ENCODE measurements at regions of chr17 and their contacts with region 1.

Region 1: DNA sequence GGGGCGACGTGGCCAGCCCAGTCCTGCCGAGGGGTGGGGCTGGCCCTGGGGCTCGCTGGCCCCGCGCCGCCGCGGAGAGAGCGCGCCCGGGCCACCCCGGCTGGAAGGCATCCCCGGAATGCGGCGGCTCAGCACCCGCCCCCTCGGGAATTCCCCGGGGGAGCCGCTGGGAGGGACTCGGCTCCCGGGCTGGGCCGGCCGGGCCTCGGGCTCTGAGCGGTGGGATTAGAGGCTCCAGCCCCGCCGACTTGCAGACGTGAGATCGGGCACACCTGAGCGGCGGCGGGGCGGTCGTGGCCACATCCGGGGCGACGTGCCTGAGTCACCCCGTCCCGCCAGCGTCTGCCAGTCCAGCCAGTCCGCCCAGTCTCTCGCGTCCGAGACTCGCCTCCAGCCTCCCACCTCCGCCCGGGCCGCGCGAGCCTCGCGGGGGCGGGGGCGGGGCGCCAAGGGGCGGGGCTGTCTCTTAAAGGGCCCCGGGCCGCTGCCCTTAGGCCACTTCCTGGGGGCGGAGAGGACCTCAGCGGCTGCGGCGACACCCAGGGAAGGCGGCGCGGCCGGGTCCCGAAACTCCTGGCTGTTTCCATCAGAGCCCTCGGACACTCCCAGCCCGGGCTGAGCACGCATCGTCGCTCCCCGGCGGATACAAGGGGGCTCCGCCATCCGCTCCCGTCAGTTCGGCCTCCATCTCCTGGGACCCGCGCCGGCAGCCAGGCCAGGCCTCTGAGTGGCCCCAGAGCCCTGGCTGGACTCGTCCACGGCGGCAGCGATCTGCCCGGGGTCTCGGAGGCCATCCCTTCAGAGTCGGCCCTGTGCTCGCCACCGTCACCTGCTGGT is at the start of gene KCTD11:
- H3K4me3 ChIP-seq: peak within 1 kb of the TSS; percentile 70
- H3K27ac ChIP-seq: peak within 1 kb of the TSS; percentile 90
- H3K4me1 ChIP-seq: peaks cover 14% of the 10 kb centered on the region
- CTCF ChIP-seq: peak; percentile 85

Region 2: GRCh38 chr17:6969323-6969726 is 382.6 kb before region 1 on chr17:
- CTCF ChIA-PET with region 1: no interaction called
- POLR2A ChIA-PET with region 1: no interaction called
- H3K4me3 ChIP-seq: no peak overlapping the region
- H3K27ac ChIP-seq: no peak overlapping the region
- H3K4me1 ChIP-seq: no peaks in the 10 kb centered on the region
- CTCF ChIP-seq: no peak

Region 3: GRCh38 chr17:7323731-7324437 is 28.0 kb before region 1 on chr17:
- CTCF ChIA-PET with region 1: interaction called, 50 read pairs
- POLR2A ChIA-PET with region 1: interaction called, 25 read pairs
- H3K4me3 ChIP-seq: no peak overlapping the region
- H3K27ac ChIP-seq: no peak overlapping the region
- H3K4me1 ChIP-seq: peaks cover 6% of the 10 kb centered on the region
- CTCF ChIP-seq: peak; percentile 79

Region 4: DNA sequence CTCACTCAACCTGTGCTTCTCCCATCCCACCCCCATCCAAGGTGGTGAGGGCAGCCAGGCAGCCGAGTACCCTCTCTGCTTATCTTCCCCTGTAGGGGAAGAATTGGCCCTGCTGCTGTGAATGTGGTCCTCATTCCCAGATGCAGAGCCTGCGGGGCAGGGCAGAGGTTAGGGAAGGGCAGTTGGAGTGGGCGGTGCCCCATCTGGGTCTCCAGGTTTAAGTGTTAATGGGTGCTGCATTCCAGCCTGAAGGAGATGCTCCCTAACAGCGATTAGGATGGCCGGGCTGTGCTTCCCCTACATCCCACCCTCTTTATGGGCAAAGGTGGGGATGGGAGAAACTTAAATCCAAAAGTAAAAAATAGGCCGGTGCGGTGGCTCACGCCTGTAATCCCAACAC is 15.2 kb after region 1 on chr17:
- CTCF ChIA-PET with region 1: interaction called, 13 read pairs
- POLR2A ChIA-PET with region 1: interaction called, 4 read pairs
- H3K4me3 ChIP-seq: no peak overlapping the region
- H3K27ac ChIP-seq: no peak overlapping the region
- H3K4me1 ChIP-seq: no peaks in the 10 kb centered on the region
- CTCF ChIP-seq: no peak

Region 5: GRCh38 chr17:7394452-7395191 is 42.7 kb after region 1 on chr17 and contains the start of gene PLSCR3:
- CTCF ChIA-PET with region 1: interaction called, 12 read pairs
- POLR2A ChIA-PET with region 1: interaction called, 7 read pairs
- H3K4me3 ChIP-seq: peak within 1 kb of the TSS; percentile 69
- H3K27ac ChIP-seq: peak within 1 kb of the TSS; percentile 89
- H3K4me1 ChIP-seq: peaks cover 3% of the 10 kb centered on the region
- CTCF ChIP-seq: peak; percentile 70

Region 6: GRCh38 chr17:7435221-7435675 is 83.4 kb after region 1 on chr17 and contains the start of gene TMEM102:
- CTCF ChIA-PET with region 1: interaction called, 37 read pairs
- POLR2A ChIA-PET with region 1: interaction called, 3 read pairs
- H3K4me3 ChIP-seq: peak within 1 kb of the TSS; percentile 50
- H3K27ac ChIP-seq: peak within 1 kb of the TSS; percentile 19; the same call in 1 of the 2 replicates
- H3K4me1 ChIP-seq: peaks cover 13% of the 10 kb centered on the region
- CTCF ChIP-seq: no peak

Region 7: GRCh38 chr17:7509937-7510336 is 158.1 kb after region 1 on chr17:
- CTCF ChIA-PET with region 1: interaction called, 17 read pairs
- POLR2A ChIA-PET with region 1: interaction called, 3 read pairs
- H3K4me3 ChIP-seq: no peak overlapping the region
- H3K27ac ChIP-seq: no peak overlapping the region
- H3K4me1 ChIP-seq: no peaks in the 10 kb centered on the region
- CTCF ChIP-seq: no peak

Measured in HEK293 (cell line).